Activated T-helper 2 cell treated with anti-CD3 and anti-CD28 coated beads, Interferon-gamma antibody, Interleukin-2, Interleukin-4, amounts not matched to agents 10 μg/mL and 5 μg/mL and 100 μg/mL, durations not matched to agents 14 hours and 24 hours and 36 hours (primary cell): ENCODE measurements at regions of chr3 and their contacts with region 1.

Region 1: GRCh38 chr3:184561061-184561912 is at the start of gene EPHB3:
- DNase-seq: peak; percentile 85
- H3K4me3 Mint-ChIP-seq: peak within 1 kb of the TSS; percentile 74
- H3K27ac Mint-ChIP-seq: peak within 1 kb of the TSS; percentile 53
- H3K4me1 Mint-ChIP-seq: peaks cover 14% of the 10 kb centered on the region
- H3K27me3 Mint-ChIP-seq: peaks cover 55% of the 10 kb centered on the region
- total RNA-seq, gene EPHB3: not detected in 2 replicates

Region 2: DNA sequence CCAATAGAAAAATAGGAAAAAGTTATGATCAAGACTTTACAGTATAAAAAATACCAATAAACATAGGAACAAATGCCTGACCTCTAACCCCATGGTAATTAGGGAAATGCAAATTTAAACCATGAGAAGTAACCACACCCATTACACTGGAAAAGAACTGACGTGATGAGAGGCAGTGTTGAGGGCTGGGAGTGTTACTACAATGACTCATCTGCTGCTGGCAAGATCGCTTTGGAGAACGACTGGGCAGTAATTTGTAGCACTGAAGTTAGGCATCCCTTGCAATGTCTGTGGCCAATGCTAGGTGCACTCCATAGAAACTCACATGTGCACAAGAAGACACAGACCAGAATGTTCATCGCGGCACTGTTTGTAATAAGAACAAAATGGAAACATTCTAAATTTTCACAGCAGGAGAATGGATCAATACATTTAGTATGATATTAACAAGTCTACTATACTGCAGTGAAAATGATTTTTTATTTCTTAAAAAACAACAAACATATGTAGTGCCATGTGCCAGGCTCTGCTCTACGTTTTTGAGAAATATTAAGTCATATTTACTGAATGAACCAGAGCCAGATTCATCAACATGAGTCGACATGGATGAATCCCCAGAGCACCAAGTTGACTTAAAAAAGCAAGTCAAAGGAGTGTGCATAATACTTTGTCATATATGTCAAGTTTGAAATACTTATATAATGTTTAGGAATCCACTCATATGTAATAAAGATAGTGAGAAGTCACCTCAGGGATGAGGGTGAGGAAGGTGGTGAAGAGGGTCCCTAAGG is 37.3 kb before region 1 on chr3:
- intact Hi-C with region 1: loop called (anchors 1 kb)
- DNase-seq: peak; percentile 39
- H3K4me3 Mint-ChIP-seq: peak overlapping the region; percentile 44
- H3K27ac Mint-ChIP-seq: peak overlapping the region; percentile 80
- H3K4me1 Mint-ChIP-seq: peaks cover 25% of the 10 kb centered on the region
- H3K27me3 Mint-ChIP-seq: peaks cover 8% of the 10 kb centered on the region

Region 3: DNA sequence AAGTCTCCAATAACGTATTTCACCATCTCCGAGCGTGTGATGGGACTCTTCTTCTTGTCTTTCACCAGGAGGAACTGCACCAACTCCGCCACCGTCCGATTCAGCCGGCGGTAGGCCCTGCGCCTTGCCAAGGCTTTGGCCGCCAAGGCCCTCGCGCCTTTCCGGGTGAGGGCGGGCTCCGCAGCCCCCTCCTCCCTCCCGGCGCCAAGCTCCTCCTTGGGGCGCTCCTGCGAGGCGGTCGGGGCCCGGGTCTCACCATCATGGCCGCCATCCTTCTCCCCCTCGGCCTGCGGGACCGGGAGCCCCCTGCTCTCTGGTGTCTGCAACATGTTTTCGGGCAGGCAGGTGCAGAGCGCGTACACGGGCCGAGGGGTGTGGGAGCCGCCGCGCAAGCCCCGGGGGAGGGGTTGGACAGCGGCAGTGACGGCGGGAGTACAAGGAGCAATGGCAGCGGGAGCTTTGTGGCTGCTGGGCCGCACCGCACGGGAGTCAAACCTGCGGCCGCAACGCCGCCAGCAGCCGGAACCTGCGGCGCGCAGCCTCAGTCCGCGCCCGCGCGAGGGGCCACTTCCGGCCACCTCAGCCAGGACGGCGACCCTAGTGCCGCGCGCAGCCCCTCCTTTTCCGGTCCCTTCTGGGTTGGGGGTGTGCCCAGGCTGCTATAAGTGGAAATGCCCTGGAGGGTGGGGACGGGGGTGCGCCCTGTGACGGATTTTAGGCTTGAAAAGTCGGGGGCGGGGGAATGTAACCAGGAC is 150.4 kb after region 1 on chr3 and contains the start of gene MAGEF1:
- intact Hi-C with region 1: loop called (anchors 1 kb)
- DNase-seq: peak; percentile 72
- H3K4me3 Mint-ChIP-seq: peak within 1 kb of the TSS; percentile 96
- H3K27ac Mint-ChIP-seq: peak within 1 kb of the TSS; percentile 75
- H3K4me1 Mint-ChIP-seq: peaks cover 30% of the 10 kb centered on the region
- H3K27me3 Mint-ChIP-seq: peaks cover 5% of the 10 kb centered on the region
- total RNA-seq, gene MAGEF1: 15.9 and 16.0 TPM in 2 replicates

Region 4: DNA sequence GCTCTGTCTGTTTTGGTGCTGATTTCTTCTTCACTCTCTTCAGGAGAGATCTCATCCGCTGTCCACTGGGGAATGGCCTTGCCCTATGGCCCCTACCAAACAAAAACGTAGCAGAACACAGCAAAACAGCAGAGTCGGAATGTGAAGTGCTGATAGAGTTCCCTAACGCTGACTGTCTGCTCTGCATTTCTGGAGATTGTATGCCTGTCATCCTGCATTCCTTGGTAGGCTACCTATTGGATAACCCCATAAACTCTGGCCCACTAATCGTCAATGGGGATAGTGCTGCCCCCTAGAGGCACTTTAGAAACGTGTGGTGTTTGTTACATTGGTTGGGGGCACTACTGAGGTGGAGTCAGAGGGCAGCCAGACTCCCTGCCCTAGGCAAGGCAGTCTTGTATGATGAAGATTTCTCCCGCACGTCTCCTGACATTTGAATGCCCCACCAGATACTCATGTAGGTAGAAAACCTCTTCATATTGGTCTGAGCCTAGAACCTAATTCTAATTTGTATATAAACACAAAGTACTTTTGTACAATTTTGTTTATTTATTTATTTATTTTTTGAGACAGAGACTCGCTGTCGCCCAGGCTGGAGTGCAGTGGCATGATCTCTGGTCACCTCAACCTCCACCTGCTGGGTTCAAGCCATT is 166.2 kb after region 1 on chr3:
- intact Hi-C with region 1: loop called (anchors 1 kb)
- DNase-seq: peak; percentile 17
- H3K4me3 Mint-ChIP-seq: no peak overlapping the region
- H3K27ac Mint-ChIP-seq: no peak overlapping the region
- H3K4me1 Mint-ChIP-seq: no peaks in the 10 kb centered on the region
- H3K27me3 Mint-ChIP-seq: peaks cover 18% of the 10 kb centered on the region

Region 5: DNA sequence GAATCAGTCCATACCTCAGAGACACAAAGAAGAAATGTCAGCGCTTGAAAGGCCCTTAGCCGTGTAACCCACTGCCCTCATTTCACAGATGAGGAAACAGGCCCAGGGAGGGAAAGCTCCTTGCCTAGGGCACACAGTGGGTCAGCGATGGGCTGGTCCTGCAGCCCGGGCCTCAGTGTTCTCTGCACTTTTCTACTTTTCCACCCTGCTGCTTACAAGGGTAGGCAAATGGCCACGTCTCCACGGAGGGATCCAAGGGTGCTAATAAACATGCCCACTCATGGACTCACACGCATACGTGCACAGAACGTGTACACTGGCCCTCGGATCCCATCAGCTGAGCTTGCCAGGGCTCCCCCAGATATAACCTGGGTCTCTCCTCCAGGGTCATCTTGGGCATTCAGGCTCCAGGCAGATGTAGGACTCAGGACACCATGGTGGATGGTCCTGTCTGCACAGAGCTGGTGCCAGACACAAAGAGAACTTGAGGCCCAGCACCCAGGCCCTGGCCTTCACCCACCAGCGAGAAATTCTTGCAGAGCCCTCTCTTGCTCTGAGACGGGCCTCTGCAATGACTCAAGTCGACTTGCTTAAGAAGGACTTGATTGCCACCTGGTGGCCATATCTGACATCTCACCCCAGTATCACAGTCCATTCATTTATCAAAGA is 216.2 kb after region 1 on chr3:
- intact Hi-C with region 1: loop called (anchors 1 kb)
- DNase-seq: peak; percentile 70
- H3K4me3 Mint-ChIP-seq: no peak overlapping the region
- H3K27ac Mint-ChIP-seq: no peak overlapping the region
- H3K4me1 Mint-ChIP-seq: no peaks in the 10 kb centered on the region
- H3K27me3 Mint-ChIP-seq: peaks cover 14% of the 10 kb centered on the region